PC-3 (cell line): ENCODE measurements at regions of chr21 and their contacts with region 1.

Region 1: DNA sequence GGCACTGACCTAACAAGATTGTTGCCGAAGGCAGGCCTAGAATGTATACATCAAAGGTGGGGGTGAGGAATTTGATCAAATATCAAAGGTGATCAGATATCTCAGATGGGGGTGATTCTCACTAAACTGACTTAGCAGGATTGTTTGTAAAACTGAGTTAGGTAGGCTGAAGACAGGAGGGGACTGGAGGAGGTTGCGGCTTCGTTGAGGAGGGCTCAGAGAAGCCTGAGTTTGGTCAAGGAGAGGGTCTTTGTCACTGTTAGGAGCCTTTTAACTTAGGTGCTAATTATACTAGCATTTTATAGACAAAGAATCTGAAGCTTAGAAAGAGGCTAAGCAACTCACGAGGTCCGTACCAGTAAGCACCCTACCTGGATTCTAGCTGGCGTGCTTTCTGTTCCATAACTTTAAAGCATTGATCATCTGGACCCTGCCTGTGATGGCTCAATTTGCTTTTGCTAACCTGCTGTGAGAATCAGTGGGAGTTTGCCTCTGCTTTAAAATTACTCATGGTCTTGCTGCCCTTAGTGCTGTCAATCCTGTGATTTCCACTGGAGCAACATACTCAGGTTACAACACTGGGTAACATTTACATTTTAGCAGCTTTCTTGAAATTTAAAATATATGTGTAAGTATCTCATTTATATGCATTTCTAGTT is 49.8 kb downstream of the ITSN1 start:
- DNase-seq: no peak
- ATAC-seq: 0 out of 2 replicates have a peak, but pooled peaks have one; percentile 38
- H3K4me3 ChIP-seq: no peak overlapping the region
- H3K27ac ChIP-seq: no peak overlapping the region
- H3K4me1 ChIP-seq: no peaks in the 10 kb centered on the region
- H3K27me3 ChIP-seq: no peaks in the 10 kb centered on the region
- CTCF ChIP-seq: no peak

Region 2: DNA sequence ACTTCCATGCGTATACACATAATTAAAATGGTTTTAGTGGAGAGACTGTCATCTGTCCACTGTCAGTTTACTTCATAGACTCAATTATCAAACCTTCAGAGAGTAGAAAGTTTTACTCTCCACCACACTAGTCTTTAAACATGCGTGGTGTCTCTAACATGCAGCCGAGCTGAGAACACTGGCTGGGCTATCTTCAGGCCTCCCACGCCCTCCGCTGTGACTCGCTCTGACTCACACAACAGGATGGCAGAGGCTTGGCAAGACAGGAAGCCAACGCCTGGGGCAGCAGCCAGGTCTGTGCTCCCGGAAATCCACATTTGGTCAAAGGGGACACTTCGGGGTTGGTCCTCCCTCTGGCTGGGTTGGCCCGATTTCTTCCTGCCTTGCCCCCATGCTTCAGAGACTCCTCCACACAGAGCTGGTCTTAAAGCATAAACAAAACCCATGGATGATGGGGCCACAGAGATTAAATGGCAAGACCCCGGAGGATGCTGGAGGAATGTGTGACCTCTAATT is 311.5 kb before region 1 on chr21:
- CTCF ChIA-PET with region 1: no interaction called
- POLR2A ChIA-PET with region 1: no interaction called
- intact Hi-C with region 1: no loop called
- DNase-seq: peak; percentile 99
- ATAC-seq: peak; percentile 90
- H3K4me3 ChIP-seq: no peak overlapping the region
- H3K27ac ChIP-seq: peak overlapping the region; percentile 95
- H3K4me1 ChIP-seq: peaks cover 41% of the 10 kb centered on the region
- H3K27me3 ChIP-seq: no peaks in the 10 kb centered on the region
- CTCF ChIP-seq: no peak

Region 3: GRCh38 chr21:33670076-33670978 is 21.7 kb before region 1 on chr21:
- CTCF ChIA-PET with region 1: no interaction called
- POLR2A ChIA-PET with region 1: no interaction called
- intact Hi-C with region 1: loop called (anchors 1 kb)
- DNase-seq: peak; percentile 37
- ATAC-seq: 0 out of 2 replicates have a peak, but pooled peaks have one; percentile 24
- H3K4me3 ChIP-seq: no peak overlapping the region
- H3K27ac ChIP-seq: no peak overlapping the region
- H3K4me1 ChIP-seq: peaks cover 3% of the 10 kb centered on the region; the same call in 1 of the 2 replicates
- H3K27me3 ChIP-seq: no peaks in the 10 kb centered on the region
- CTCF ChIP-seq: no peak

Region 4: GRCh38 chr21:33734291-33734690 is 42.2 kb after region 1 on chr21:
- CTCF ChIA-PET with region 1: no interaction called
- POLR2A ChIA-PET with region 1: interaction called, 14 read pairs
- intact Hi-C with region 1: no loop called
- DNase-seq: no peak
- ATAC-seq: no peak
- H3K4me3 ChIP-seq: no peak overlapping the region
- H3K27ac ChIP-seq: no peak overlapping the region
- H3K4me1 ChIP-seq: no peaks in the 10 kb centered on the region; the same call in 1 of the 2 replicates
- H3K27me3 ChIP-seq: no peaks in the 10 kb centered on the region
- CTCF ChIP-seq: no peak